Naive thymus-derived CD4-positive, alpha-beta T cell (primary cell): ENCODE measurements at regions of chr15 and their contacts with region 1.

Region 1: GRCh38 chr15:70512772-70513362 is 250.5 kb downstream of the UACA start:
- DNase-seq: peak; percentile 30 to 72 (median 45)
- ATAC-seq: peak; percentile 79
- H3K4me3 ChIP-seq: no peak overlapping the region
- H3K4me3 Mint-ChIP-seq: no peak overlapping the region
- H3K27ac ChIP-seq: no peak overlapping the region
- H3K27ac Mint-ChIP-seq: peak overlapping the region in 1 of 9 donors; percentile 32
- H3K4me1 ChIP-seq: peaks cover 0 to 10% of the 10 kb centered on the region in 2 donors
- H3K4me1 Mint-ChIP-seq: peaks cover 10 to 38% (median 17%) of the 10 kb centered on the region in 7 donors
- H3K27me3 ChIP-seq: no peaks in the 10 kb centered on the region
- H3K27me3 Mint-ChIP-seq: peaks cover 0 to 28% (median 0%) of the 10 kb centered on the region in 5 donors

Region 2: GRCh38 chr15:69523010-69524001 is 989.6 kb before region 1 on chr15:
- CTCF ChIA-PET with region 1: no interaction called
- POLR2A ChIA-PET with region 1: no interaction called
- intact Hi-C with region 1: loop called in 1 of 2 experiments (anchors 2 kb)
- DNase-seq: peak; percentile 17 to 66 (median 40)
- ATAC-seq: peak; percentile 67
- H3K4me3 ChIP-seq: no peak overlapping the region
- H3K4me3 Mint-ChIP-seq: no peak overlapping the region
- H3K27ac ChIP-seq: no peak overlapping the region
- H3K27ac Mint-ChIP-seq: no peak overlapping the region
- H3K4me1 ChIP-seq: no peaks in the 10 kb centered on the region
- H3K4me1 Mint-ChIP-seq: peaks cover 0 to 3% (median 0%) of the 10 kb centered on the region in 7 donors
- H3K27me3 ChIP-seq: no peaks in the 10 kb centered on the region
- H3K27me3 Mint-ChIP-seq: peaks cover 0 to 29% (median 0%) of the 10 kb centered on the region in 5 donors

Region 3: DNA sequence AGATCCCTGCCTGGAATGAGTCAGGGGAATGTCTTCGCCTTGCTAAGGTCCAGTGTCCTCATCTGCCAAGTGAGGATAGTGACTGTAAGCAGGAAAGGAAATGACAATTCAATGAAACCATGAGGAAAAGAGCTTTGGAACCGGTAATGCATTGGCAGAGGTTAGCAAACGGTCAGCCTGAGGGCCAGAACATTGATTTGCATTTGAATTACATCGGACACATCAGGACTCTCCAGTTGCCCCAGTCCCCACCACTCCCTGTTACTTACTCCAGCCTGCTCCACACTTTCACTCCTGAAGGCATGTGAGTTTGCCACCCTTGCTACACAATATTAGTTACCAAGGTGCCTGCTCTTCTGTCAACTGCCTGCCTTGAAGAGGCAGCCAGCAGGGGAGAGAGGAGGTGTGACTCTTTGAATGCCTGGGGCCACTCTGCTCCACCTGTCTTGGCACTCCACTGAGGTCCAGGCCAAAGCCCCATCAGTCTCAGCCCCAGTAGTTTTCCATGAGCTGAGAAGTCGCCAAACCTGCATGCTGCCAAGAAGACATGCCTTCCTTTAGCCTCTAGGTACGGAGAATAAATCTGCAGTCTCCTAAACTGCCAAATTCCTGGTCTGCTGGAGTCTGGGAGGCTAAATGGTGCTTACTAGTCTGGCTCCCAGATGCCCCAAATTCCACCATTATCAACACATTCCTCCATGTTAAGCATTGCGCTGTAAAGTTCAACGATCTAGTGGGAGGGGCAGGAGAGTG is 223.5 kb before region 1 on chr15:
- CTCF ChIA-PET with region 1: no interaction called
- POLR2A ChIA-PET with region 1: no interaction called
- intact Hi-C with region 1: no loop called
- DNase-seq: no peak
- ATAC-seq: no peak
- H3K4me3 ChIP-seq: no peak overlapping the region
- H3K4me3 Mint-ChIP-seq: no peak overlapping the region
- H3K27ac ChIP-seq: no peak overlapping the region
- H3K27ac Mint-ChIP-seq: peak overlapping the region in 1 of 9 donors; percentile 6
- H3K4me1 ChIP-seq: no peaks in the 10 kb centered on the region
- H3K4me1 Mint-ChIP-seq: peaks cover 0 to 6% (median 0%) of the 10 kb centered on the region in 7 donors
- H3K27me3 ChIP-seq: no peaks in the 10 kb centered on the region
- H3K27me3 Mint-ChIP-seq: peaks cover 0 to 35% (median 3%) of the 10 kb centered on the region in 5 donors

Region 4: DNA sequence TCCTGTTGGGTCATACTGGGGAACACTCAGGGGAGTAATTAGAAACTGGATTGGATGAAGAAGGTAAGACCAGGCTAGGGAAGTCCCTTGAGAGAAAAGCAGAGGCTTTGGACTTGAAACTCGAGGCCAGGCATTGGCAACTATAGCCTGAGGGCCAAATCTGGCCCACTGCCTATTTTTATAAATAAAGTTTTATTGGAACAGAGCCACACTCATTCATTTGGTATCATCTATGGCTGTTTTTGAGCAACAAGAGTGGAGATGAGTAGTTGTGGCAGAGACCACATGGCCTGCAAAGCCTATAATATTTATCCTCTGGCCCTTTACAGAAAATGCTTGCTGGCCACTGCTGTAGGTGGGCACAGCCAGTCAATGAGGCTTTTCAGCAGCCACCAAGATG is 50.9 kb before region 1 on chr15:
- CTCF ChIA-PET with region 1: interaction called, 3 read pairs
- POLR2A ChIA-PET with region 1: no interaction called
- intact Hi-C with region 1: loop called (anchors 1 to 2 kb)
- DNase-seq: no peak
- ATAC-seq: no peak
- H3K4me3 ChIP-seq: no peak overlapping the region
- H3K4me3 Mint-ChIP-seq: no peak overlapping the region
- H3K27ac ChIP-seq: no peak overlapping the region
- H3K27ac Mint-ChIP-seq: no peak overlapping the region
- H3K4me1 ChIP-seq: no peaks in the 10 kb centered on the region
- H3K4me1 Mint-ChIP-seq: peaks cover 11 to 19% (median 14%) of the 10 kb centered on the region in 7 donors
- H3K27me3 ChIP-seq: no peaks in the 10 kb centered on the region
- H3K27me3 Mint-ChIP-seq: peaks cover 0 to 74% (median 5%) of the 10 kb centered on the region in 5 donors

Region 5: DNA sequence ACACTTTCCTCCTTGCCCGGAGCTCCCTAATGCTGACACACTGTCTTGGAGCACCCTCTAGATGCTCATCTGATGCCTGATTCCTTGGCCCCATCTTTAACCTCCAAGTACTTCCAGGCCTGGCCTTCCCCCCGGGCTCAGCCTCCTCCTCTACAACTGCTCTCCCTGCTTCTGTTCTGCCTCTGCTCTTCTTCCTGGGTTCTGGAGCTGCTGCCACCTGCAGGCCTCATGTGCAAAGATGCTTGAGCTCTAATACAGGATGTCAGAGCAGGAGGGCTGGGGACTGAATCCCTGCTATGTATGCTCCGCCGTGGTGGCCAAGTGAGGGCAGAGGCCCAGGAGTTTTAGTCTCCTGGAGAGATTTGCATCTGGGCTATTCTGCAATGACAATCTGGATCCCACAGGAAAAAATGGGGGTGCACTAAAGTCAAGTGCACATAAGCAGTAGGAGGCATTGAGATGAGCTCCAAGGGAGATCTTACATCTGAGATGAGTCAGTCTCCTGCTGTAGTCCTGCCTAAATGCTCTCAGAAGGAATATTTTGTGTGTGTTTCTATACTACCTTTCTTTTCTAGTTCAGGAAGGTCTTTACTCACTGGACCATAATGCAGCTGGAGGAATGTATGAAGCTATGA is 45.9 kb before region 1 on chr15:
- CTCF ChIA-PET with region 1: interaction called, 3 read pairs
- POLR2A ChIA-PET with region 1: no interaction called
- intact Hi-C with region 1: loop called in 1 of 2 experiments (anchors 1 kb)
- DNase-seq: peak in 6 of 9 donors; percentile 20 to 61 (median 54)
- ATAC-seq: peak; percentile 57
- H3K4me3 ChIP-seq: no peak overlapping the region
- H3K4me3 Mint-ChIP-seq: no peak overlapping the region
- H3K27ac ChIP-seq: no peak overlapping the region
- H3K27ac Mint-ChIP-seq: peak overlapping the region in 1 of 9 donors; percentile 3
- H3K4me1 ChIP-seq: no peaks in the 10 kb centered on the region
- H3K4me1 Mint-ChIP-seq: peaks cover 0 to 13% (median 6%) of the 10 kb centered on the region in 7 donors
- H3K27me3 ChIP-seq: no peaks in the 10 kb centered on the region
- H3K27me3 Mint-ChIP-seq: peaks cover 0 to 81% (median 4%) of the 10 kb centered on the region in 5 donors